Caco-2 (cell line): ENCODE measurements at regions of chr17 and their contacts with region 1.

Region 1: DNA sequence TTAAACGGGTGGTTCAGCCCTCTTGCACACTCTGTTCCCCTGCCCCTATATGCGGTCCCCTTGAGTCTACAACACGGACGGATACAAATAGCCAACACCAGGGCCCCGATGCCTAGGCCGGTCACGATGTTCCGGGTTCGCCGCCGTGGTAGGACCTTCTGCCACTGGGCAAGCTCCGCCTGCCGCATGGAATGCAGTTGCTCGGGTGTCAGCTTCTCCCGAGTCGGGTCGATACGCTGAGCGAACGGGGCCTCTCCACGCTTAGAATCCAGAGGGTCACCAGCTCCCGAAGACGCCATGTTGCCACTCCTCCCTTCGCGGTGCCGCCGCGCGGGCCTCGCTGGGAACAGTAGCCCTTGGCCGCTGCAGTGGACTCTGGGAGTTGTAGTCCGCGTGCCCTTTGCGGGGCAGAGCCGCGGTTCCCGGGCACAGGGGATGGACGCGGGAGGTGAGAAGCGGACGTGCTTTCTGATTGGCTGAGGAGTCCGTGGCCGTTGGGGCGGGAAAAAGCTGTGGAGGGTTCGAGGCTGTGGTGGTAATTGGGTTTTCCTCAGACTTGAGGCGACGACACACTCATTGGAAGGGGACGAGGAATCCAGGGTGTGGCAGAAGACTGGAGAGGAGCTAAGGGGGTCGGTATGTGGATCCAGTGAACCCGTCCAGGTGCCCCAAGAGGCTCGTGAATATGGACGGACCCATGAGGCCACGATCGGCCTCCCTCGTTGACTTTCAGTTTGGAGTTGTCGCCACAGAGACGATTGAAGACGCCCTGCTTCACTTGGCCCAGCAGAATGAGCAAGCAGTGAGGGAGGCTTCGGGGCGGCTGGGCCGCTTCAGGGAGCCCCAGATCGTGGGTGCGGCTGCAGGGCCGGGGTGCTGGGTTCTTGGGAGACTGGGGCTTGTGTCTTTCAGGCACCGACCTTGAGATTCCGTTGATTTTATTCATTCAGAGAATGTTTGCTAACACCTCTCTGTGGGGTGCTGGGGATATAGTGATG is at the starts of genes CNTD1 and COA3:
- DNase-seq: peak; percentile 93
- H3K4me3 ChIP-seq: peak within 1 kb of the TSS; percentile 72
- H3K4me3 Mint-ChIP-seq: peak within 1 kb of the TSS; percentile 77
- H3K27ac Mint-ChIP-seq: peak within 1 kb of the TSS; percentile 71
- H3K4me1 ChIP-seq: peaks cover 23% of the 10 kb centered on the region
- H3K4me1 Mint-ChIP-seq: peaks cover 8% of the 10 kb centered on the region
- H3K27me3 ChIP-seq: no peaks in the 10 kb centered on the region
- H3K27me3 Mint-ChIP-seq: no peaks in the 10 kb centered on the region
- CTCF ChIP-seq: peak in 1 of 2 experiments; percentile 1
- total RNA-seq, gene CNTD1: 1.7 and 2.2 TPM in 2 replicates
- total RNA-seq, gene COA3: 63.5 and 63.6 TPM in 2 replicates

Region 2: DNA sequence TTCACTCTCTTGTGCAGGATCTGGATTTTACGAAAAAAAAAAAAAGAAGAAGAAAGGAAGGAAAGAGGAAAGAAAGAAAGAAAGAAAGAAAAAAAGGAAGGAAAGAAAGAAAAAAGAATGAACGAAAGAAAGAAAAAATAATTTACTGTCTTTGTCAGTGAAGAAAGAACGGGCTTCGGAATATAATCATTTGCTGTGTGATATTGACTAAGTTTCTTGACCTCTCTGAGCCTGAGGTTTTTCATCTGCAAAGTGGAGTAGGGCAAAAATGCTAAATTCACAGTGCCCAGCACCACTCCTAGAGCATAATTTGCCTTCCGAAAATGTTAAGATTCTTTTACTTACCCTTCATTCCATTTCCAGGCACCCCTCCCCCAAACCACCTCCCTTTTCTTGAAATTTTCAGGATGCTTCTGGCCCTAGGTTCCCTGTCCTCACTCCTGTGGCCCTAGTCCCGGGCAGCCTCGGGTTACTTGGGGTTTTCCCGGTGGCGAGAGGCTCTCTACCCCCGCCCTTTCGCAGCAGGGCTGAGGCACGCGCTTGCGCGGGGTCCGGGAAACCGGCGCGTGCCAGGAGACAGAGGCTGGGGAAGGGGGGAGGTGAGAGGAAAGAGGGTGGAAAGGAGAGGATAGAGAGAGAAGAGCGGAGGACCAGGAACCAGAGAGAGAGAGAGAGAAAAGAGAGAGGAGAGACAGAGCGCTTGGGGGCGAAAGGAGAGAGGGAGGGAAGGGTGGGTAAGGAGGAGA is 116.5 kb before region 1 on chr17 and contains the start of gene CNTNAP1:
- CTCF ChIA-PET with region 1: no interaction called
- POLR2A ChIA-PET with region 1: no interaction called
- intact Hi-C with region 1: no loop called
- DNase-seq: peak in 1 of 2 experiments; percentile 57
- H3K4me3 ChIP-seq: peak within 1 kb of the TSS; percentile 42
- H3K4me3 Mint-ChIP-seq: peak within 1 kb of the TSS; percentile 82
- H3K27ac Mint-ChIP-seq: no peak within 1 kb of the TSS
- H3K4me1 ChIP-seq: peaks cover 21% of the 10 kb centered on the region
- H3K4me1 Mint-ChIP-seq: peaks cover 8% of the 10 kb centered on the region
- H3K27me3 ChIP-seq: no peaks in the 10 kb centered on the region
- H3K27me3 Mint-ChIP-seq: no peaks in the 10 kb centered on the region
- CTCF ChIP-seq: no peak
- total RNA-seq, gene CNTNAP1: 7.2 and 7.5 TPM in 2 replicates

Region 3: GRCh38 chr17:42773290-42774035 is 25.2 kb before region 1 on chr17 and contains the start of gene VPS25:
- CTCF ChIA-PET with region 1: no interaction called
- POLR2A ChIA-PET with region 1: interaction called, 12 read pairs
- intact Hi-C with region 1: no loop called
- DNase-seq: peak; percentile 84 to 86
- H3K4me3 ChIP-seq: peak within 1 kb of the TSS; percentile 77
- H3K4me3 Mint-ChIP-seq: peak within 1 kb of the TSS; percentile 96
- H3K27ac Mint-ChIP-seq: peak within 1 kb of the TSS; percentile 93
- H3K4me1 ChIP-seq: 0 out of 2 replicates have a peak, but pooled peaks cover 3% of the 10 kb centered on the region
- H3K4me1 Mint-ChIP-seq: no peaks in the 10 kb centered on the region
- H3K27me3 ChIP-seq: no peaks in the 10 kb centered on the region
- H3K27me3 Mint-ChIP-seq: no peaks in the 10 kb centered on the region
- CTCF ChIP-seq: no peak
- total RNA-seq, gene VPS25: 96.0 and 103 TPM in 2 replicates

Region 4: DNA sequence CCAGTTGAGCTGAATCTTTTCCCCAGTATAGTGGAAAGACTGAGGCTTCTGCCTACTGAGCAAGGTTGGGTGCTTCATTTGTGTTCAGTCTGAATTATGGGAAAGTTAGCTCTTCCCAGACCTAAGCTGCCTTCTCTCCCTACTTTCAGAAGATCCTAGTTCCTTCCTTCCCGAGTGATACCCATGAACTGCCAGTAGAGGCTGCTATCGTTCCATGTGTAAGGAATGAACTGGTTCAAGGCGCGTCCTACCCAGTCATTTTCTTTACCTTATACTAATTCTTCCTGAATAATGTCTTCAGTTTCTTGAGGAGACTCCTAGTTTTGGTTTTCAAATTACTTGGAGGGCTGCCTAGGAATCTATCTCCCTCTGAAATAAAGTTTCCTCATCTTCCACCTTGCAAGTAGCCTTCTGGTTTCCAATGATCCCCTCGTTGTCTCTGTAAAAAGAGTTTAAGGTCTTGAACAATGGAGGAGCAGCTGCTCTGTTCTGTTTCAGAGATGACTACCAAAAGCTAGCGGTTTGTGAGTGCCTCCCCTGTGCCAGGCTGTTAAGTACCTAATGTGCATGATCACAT is 44.8 kb after region 1 on chr17:
- CTCF ChIA-PET with region 1: no interaction called
- POLR2A ChIA-PET with region 1: no interaction called
- intact Hi-C with region 1: no loop called
- DNase-seq: peak in 1 of 2 experiments; percentile 70
- H3K4me3 ChIP-seq: no peak overlapping the region
- H3K4me3 Mint-ChIP-seq: no peak overlapping the region
- H3K27ac Mint-ChIP-seq: no peak overlapping the region
- H3K4me1 ChIP-seq: no peaks in the 10 kb centered on the region
- H3K4me1 Mint-ChIP-seq: no peaks in the 10 kb centered on the region
- H3K27me3 ChIP-seq: no peaks in the 10 kb centered on the region
- H3K27me3 Mint-ChIP-seq: no peaks in the 10 kb centered on the region
- CTCF ChIP-seq: peak; percentile 96 to 99

Region 5: GRCh38 chr17:42895185-42895555 is 96.5 kb after region 1 on chr17:
- CTCF ChIA-PET with region 1: no interaction called
- POLR2A ChIA-PET with region 1: no interaction called
- intact Hi-C with region 1: no loop called
- DNase-seq: no peak
- H3K4me3 ChIP-seq: no peak overlapping the region
- H3K4me3 Mint-ChIP-seq: no peak overlapping the region
- H3K27ac Mint-ChIP-seq: no peak overlapping the region
- H3K4me1 ChIP-seq: peaks cover 12% of the 10 kb centered on the region; the same call in 1 of the 2 replicates
- H3K4me1 Mint-ChIP-seq: peaks cover 14% of the 10 kb centered on the region
- H3K27me3 ChIP-seq: no peaks in the 10 kb centered on the region
- H3K27me3 Mint-ChIP-seq: no peaks in the 10 kb centered on the region
- CTCF ChIP-seq: no peak

Region 6: DNA sequence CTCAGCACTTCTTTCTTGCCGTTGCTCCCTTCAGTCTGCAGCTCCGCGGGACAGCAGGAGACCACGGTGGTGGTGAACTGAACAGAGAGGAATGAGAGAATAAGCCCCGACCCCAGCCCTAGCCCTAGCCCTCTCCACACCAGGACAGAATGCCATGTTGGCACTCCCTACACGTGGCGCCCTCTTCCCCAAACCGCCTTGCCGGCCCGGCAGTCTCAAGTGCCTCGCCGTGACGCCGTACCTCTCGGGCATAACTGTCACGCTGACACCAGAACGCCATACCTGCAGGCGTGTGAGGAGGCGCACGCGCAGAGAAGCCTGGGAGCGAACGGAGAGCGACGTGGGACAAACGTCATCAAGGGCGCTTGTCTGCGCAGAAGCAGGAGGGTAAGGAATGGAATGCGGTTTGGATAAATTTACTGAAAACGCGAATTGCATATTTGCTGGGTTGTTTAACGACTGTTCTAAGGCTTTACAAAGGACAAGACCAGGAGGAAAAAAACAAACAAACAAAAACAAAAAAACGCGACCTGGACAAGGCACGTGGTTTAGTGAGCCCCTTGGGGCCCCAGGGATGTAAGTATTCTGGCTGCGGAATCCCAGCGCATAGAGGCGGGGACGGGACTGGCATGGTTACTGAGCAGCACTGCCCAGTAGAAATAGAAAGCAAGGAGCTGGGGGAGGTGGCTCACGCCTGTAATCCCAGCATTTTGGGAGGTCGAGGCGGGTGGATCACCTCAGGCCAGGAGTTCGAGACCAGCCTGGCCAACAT is 165.7 kb after region 1 on chr17 and contains the start of gene AARSD1:
- CTCF ChIA-PET with region 1: no interaction called
- POLR2A ChIA-PET with region 1: interaction called, 10 read pairs
- intact Hi-C with region 1: no loop called
- DNase-seq: peak; percentile 95 to 96
- H3K4me3 ChIP-seq: peak within 1 kb of the TSS; percentile 64
- H3K4me3 Mint-ChIP-seq: peak within 1 kb of the TSS; percentile 99
- H3K27ac Mint-ChIP-seq: peak within 1 kb of the TSS; percentile 99
- H3K4me1 ChIP-seq: no peaks in the 10 kb centered on the region
- H3K4me1 Mint-ChIP-seq: peaks cover 9% of the 10 kb centered on the region
- H3K27me3 ChIP-seq: no peaks in the 10 kb centered on the region
- H3K27me3 Mint-ChIP-seq: no peaks in the 10 kb centered on the region
- CTCF ChIP-seq: no peak
- total RNA-seq, gene AARSD1: 69.0 and 76.2 TPM in 2 replicates